Endothelial cell of umbilical vein (primary cell): ENCODE measurements at regions of chr17 and their contacts with region 1.

Region 1: GRCh38 chr17:31524926-31525800 is 133.7 kb downstream of the RAB11FIP4 start:
- DNase-seq: peak; percentile 51
- H3K4me3 ChIP-seq: no peak overlapping the region
- H3K27ac ChIP-seq: no peak overlapping the region
- H3K4me1 ChIP-seq: no peaks in the 10 kb centered on the region
- H3K27me3 ChIP-seq: no peaks in the 10 kb centered on the region
- CTCF ChIP-seq: peak; percentile 92 to 93
- POLR2A ChIP-seq: no peak

Region 2: DNA sequence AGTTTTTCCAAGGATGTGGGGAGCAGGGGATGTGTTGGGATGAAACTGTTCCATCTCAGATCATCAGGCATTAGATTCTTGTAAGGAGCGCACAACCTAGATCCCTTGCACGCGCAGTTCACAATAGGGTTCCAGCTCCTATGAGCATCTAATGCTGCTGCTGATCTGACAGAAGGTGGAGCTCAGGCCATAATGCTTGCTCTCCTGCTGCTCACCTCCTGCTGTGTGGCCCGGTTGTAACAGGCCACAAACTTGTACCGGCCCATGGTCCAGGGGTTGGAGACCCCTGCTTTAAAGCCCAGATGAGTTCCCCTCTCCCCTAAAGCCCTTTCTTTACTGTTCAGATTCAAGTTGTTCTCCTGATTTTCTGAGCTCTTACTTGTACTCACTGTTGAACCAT is 509.5 kb before region 1 on chr17:
- CTCF ChIA-PET with region 1: no interaction called
- POLR2A ChIA-PET with region 1: no interaction called
- dilution Hi-C with region 1: no loop called
- intact Hi-C with region 1: loop called (anchors 5 kb)
- DNase-seq: no peak
- H3K4me3 ChIP-seq: no peak overlapping the region
- H3K27ac ChIP-seq: no peak overlapping the region
- H3K4me1 ChIP-seq: peaks cover 9% of the 10 kb centered on the region
- H3K27me3 ChIP-seq: no peaks in the 10 kb centered on the region
- CTCF ChIP-seq: no peak
- POLR2A ChIP-seq: no peak

Region 3: GRCh38 chr17:31388770-31389661 is 136.1 kb before region 1 on chr17:
- CTCF ChIA-PET with region 1: interaction called, 92 read pairs
- POLR2A ChIA-PET with region 1: no interaction called
- dilution Hi-C with region 1: no loop called
- intact Hi-C with region 1: loop called (anchors 1 kb)
- DNase-seq: peak; percentile 32
- H3K4me3 ChIP-seq: no peak overlapping the region
- H3K27ac ChIP-seq: no peak overlapping the region
- H3K4me1 ChIP-seq: no peaks in the 10 kb centered on the region
- H3K27me3 ChIP-seq: peaks cover 13 to 17% of the 10 kb centered on the region in 2 experiments
- CTCF ChIP-seq: peak; percentile 78 to 90
- POLR2A ChIP-seq: no peak

Region 4: GRCh38 chr17:31446195-31446967 is 78.8 kb before region 1 on chr17:
- CTCF ChIA-PET with region 1: interaction called, 6 read pairs
- POLR2A ChIA-PET with region 1: no interaction called
- dilution Hi-C with region 1: no loop called
- intact Hi-C with region 1: loop called (anchors 2 kb)
- DNase-seq: no peak
- H3K4me3 ChIP-seq: no peak overlapping the region
- H3K27ac ChIP-seq: no peak overlapping the region
- H3K4me1 ChIP-seq: no peaks in the 10 kb centered on the region
- H3K27me3 ChIP-seq: peaks cover 4 to 8% of the 10 kb centered on the region in 2 experiments
- CTCF ChIP-seq: no peak
- POLR2A ChIP-seq: no peak

Region 5: DNA sequence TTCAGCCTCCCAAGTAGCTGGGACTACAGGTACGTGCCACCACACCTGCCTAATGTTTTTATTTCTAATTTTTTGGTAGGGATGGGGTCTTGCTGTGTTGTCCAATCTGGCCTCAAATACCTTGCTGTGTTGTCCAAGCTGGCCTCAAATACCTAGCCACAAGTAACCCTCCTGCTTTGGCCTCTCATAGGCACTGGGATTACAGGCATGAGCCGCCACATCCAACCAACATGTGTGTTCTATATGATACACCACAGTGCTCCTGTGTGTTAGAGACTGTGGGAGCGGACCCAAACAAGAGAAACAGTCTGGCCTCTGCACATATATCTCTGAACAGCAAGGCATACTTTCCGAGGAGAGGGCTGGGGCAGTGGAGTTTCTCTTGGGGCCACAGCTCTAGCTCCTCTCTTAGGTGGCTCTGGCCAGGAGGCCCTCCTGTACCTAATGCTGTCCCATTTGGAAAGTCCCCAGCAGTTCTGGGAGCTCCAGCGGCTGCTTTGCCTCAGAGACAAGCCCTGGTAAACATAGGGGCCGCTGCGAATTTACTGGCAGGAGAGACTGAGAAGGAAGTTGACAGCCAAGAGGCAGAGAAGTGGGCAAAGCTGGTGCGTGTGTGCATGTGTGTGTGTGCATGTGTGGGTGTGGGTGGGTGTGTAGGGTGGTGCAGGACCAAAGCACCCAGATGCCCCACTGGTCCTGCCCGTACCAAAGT is 38.7 kb before region 1 on chr17:
- CTCF ChIA-PET with region 1: no interaction called
- POLR2A ChIA-PET with region 1: no interaction called
- dilution Hi-C with region 1: no loop called
- intact Hi-C with region 1: no loop called
- DNase-seq: no peak
- H3K4me3 ChIP-seq: no peak overlapping the region
- H3K27ac ChIP-seq: no peak overlapping the region
- H3K4me1 ChIP-seq: no peaks in the 10 kb centered on the region
- H3K27me3 ChIP-seq: peaks cover 38 to 48% of the 10 kb centered on the region in 2 experiments
- CTCF ChIP-seq: no peak
- POLR2A ChIP-seq: no peak

Region 6: GRCh38 chr17:31510308-31511194 is 14.6 kb before region 1 on chr17:
- CTCF ChIA-PET with region 1: interaction called, 10 read pairs
- POLR2A ChIA-PET with region 1: no interaction called
- dilution Hi-C with region 1: no loop called
- intact Hi-C with region 1: no loop called
- DNase-seq: no peak
- H3K4me3 ChIP-seq: no peak overlapping the region
- H3K27ac ChIP-seq: no peak overlapping the region
- H3K4me1 ChIP-seq: no peaks in the 10 kb centered on the region
- H3K27me3 ChIP-seq: peaks cover 2 to 4% of the 10 kb centered on the region in 2 experiments
- CTCF ChIP-seq: no peak
- POLR2A ChIP-seq: no peak